Activated naive CD4-positive, alpha-beta T cell treated with anti-CD3 and anti-CD28 coated beads, Interleukin-2, amount 10 ng/mL, durations not matched to agents 7 days and 5 days (primary cell): ENCODE measurements at regions of chr6 and their contacts with region 1.

Region 1: GRCh38 chr6:43506667-43507471 is 3.3 kb downstream of the LRRC73 start:
- DNase-seq: peak; percentile 85
- H3K4me3 Mint-ChIP-seq: no peak overlapping the region
- H3K27ac Mint-ChIP-seq: no peak overlapping the region
- H3K4me1 Mint-ChIP-seq: peaks cover 13% of the 10 kb centered on the region
- H3K27me3 Mint-ChIP-seq: peaks cover 34% of the 10 kb centered on the region

Region 2: DNA sequence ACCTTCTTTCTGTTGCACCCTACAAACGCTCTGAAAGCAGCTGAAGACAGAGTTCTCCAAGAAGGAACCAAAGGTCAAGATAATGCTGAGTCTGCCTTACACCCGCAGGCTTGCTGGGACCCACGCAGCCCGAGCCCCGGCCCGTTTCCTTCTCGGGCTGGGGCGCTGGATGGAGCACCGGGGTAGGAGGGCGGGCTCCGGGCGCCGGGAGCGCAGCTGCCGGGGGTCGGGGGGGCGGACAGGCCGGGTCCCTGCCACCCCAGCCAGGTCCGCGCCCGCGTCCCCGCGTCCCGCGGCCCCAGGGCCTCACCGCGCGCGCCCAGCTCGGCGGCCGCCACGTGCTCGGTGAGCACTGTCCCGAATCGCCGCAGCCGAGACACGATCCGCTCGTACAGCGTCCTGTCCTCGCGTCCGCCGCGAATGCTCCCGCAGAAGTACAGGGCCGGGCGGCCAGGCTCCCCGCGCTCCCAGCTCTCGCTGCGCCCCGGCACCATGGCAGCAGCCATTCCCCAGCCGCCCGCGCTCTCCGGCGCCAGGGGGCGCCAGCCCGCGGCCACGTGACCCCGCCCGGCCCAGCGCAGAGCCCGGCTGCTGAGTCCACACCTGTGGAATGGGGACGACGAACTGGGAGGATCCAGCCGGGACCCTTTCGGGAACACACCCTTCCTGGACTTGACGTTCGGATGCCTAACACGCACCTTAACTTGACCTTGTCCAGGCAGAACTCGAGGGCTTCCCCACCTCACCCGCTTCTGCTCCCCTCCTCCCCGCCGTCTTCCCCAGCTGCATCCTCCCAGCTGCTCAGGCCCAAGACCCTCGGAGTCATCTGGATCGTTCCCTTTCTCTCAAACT is 277.7 kb before region 1 on chr6 and contains the start of gene DNPH1:
- CTCF ChIA-PET with region 1: interaction called, 17 read pairs
- DNase-seq: peak; percentile 83
- H3K4me3 Mint-ChIP-seq: peak within 1 kb of the TSS; percentile 84
- H3K27ac Mint-ChIP-seq: peak within 1 kb of the TSS; percentile 84
- H3K4me1 Mint-ChIP-seq: peaks cover 46% of the 10 kb centered on the region
- H3K27me3 Mint-ChIP-seq: peaks cover 31% of the 10 kb centered on the region

Region 3: DNA sequence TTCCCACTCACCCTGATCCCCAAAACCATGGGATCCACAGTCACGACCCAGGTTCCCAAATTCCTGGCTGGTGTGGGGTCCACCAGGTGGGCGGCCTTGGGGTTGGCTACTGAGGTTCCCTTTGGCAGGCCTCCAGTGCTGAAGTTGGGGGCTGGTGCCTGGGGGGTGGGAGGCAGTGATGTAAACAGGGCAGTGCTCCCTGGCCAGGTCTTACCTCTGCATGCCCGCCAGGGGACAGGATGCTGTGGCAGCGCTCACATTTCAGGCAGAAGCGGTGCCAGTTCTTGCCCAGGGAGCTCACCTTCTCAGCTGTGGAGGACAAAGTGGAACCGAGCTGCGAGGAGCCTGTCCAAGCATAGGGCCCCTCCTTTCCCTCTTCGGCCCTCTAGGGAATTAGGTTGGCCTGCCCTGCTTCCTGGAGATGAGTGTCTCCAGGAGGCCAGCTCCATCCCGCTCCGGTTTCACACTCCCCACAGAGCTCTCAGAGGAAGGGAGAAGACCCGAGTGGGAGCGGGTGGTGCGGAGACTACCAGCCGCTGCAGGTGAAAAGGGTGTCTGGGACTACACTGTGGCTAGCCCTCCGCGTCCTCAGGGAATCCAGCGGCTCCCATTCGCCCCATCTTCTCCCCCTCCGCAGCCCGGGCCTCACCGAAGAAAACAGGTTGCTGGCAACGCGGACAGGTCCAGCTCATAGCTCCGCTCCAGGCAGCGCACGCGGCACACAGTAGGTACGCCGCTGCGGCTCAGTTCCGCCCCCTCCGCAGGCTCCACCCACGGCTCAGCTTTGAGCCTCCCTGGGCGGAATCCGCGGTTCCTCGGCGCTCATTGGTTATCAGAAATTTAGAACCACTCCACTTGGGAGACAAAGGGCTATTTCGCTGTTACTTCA is 198.5 kb before region 1 on chr6 and contains the start of gene CRIP3:
- CTCF ChIA-PET with region 1: interaction called, 11 read pairs
- DNase-seq: peak; percentile 72
- H3K4me3 Mint-ChIP-seq: peak within 1 kb of the TSS; percentile 67
- H3K27ac Mint-ChIP-seq: no peak within 1 kb of the TSS
- H3K4me1 Mint-ChIP-seq: peaks cover 13% of the 10 kb centered on the region
- H3K27me3 Mint-ChIP-seq: peaks cover 46% of the 10 kb centered on the region

Region 4: DNA sequence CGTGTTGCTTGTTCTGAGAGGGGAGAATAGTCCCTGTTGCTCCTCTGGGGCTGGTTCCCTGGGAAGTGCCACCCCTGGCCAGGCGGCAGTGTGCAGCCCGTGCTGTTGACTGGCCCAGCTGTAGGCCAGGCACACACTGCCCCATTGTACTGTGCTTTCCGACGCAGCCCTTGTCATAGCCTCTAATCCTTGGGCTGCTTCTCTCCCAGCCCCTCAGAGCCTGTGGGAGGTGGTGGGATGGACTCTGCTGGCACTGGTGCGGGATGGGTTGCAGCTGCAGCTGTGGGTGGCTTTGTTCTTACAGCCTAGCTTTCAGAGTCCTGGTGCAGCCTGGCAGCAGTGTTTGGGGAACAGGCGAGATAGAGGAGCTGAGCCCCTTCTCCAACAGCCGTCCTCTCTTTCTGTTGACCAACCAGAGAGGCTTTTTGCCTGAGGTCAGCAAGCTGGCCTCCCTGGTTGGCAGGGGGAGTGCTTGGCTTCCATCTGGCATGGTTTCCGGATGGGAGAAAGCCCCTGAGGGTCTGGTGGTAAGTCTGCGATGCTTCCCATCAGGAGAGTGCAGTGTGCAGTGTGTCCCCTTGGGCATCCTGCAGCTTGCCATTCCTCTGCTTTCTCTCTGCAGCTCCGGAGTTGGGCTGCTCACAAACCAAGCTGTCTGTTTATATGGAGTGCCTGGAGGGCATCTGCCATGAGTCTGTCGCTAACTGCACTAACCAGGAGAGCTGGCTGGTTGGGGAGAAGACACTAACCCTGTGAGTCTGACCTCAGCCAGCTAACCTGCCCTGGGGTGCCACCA is 17.4 kb before region 1 on chr6:
- CTCF ChIA-PET with region 1: interaction called, 44 read pairs
- DNase-seq: no peak
- H3K4me3 Mint-ChIP-seq: no peak overlapping the region
- H3K27ac Mint-ChIP-seq: no peak overlapping the region
- H3K4me1 Mint-ChIP-seq: peaks cover 9% of the 10 kb centered on the region
- H3K27me3 Mint-ChIP-seq: no peaks in the 10 kb centered on the region

Region 5: DNA sequence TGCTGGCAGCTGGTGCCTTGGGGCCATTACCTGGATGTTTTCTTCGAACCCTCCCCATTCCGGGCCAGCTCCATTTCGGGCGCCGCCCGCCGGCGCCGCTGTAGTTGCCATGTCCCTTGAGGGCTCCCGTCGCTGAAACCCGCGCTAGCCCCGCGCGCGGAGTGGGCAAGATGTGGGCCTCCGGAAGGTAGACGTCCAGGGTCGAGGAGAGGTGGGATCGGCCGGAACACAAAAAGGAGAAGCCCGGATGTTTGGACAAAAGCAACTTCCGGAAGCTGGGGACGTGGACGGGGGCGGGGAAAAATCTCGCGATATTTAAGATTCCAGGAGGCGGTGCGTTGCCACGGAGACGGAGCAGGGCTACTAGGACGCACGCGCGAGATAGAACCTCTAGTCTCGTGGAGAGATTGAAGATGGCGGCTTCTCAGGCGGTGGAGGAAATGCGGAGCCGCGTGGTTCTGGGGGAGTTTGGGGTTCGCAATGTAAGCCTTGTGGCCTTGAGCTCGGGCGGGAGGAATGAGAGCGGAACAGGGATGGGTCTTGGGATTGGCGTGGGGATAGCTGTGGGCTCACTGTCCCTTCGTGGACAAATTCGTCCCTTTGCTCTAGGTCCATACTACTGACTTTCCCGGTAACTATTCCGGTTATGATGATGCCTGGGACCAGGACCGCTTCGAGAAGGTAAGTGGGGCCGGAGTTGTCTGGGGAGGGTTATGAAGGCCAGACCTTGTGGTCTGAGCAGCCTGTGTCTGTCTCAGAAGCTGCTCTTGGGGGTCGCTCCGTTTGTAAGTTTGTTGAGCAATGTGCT is 10.0 kb after region 1 on chr6 and contains the starts of genes POLR1C and YIPF3:
- CTCF ChIA-PET with region 1: interaction called, 27 read pairs
- DNase-seq: peak; percentile 98
- H3K4me3 Mint-ChIP-seq: no peak within 1 kb of the TSS
- H3K27ac Mint-ChIP-seq: no peak within 1 kb of the TSS
- H3K4me1 Mint-ChIP-seq: peaks cover 28% of the 10 kb centered on the region
- H3K27me3 Mint-ChIP-seq: no peaks in the 10 kb centered on the region

Region 6: DNA sequence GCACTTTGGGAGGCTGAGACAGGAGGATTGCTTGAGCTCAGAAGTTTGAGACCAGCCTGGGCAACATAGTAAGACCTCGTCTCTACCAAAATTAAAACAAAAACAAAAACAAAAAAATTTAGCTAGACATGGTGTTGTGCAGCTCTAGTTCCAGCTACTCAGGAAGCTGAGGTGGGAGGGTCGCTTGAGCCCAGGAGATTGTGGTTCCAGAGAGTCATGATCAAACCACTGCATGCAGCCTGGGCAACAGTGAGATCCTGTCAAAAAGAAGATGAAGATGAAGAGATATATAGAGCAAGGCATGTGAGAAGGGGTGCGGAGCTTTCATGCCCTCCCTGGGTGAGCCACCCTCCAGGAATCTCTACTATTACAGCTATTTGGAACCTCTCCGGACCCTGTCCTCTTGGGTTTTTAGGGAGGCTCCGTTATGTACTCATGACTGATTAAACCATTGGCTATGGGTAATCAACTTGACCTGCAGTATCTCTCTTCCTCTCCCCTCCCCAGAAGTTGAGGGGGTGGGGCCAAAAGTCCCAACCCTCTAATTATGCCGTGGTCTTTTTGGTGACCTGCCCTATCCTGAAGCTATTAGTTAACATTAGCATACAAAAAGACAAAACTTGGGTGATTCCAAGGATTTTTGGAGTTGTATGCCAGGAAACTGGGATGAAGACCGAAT is 78.2 kb after region 1 on chr6:
- CTCF ChIA-PET with region 1: no interaction called
- DNase-seq: peak; percentile 74
- H3K4me3 Mint-ChIP-seq: peak overlapping the region; percentile 36
- H3K27ac Mint-ChIP-seq: peak overlapping the region; percentile 94
- H3K4me1 Mint-ChIP-seq: peaks cover 52% of the 10 kb centered on the region
- H3K27me3 Mint-ChIP-seq: no peaks in the 10 kb centered on the region